ENCODE measurements at regions of chr5 and their contacts with region 1.

Region 1: DNA sequence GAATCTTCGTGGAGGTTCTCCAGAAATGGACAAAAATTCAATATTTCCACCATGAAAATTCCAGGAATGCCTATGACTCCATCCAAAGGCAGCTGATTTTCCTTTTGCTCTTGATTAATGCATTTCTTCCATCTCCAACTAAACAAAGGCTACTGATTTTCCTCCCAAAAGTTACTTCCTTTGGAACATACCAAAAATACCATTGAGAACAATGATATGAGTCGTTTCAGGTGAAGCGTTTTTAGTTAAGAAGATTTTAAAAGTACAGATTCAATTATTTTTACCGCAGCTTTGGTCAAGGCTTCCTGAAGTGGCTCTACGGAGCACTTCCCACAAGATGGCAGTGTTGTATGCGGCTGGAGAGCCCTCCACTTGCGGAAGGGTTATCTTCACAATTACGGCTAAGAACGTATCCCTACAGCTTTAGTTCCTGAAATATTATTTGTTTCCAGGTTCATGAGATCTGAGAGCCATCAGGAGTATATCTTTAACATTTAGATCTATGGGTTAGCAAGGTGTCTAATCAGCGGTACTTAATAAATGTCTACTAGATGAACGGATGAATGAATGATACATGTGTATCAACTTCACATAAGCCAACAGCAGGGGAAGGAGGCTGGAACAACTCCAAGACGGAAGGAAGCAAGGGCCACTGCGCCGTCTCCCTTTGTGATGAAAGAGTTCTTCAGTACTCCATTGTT is 35.9 kb upstream of the ARSB start:
- DNase-seq: peak; percentile 80
- H3K4me3 ChIP-seq: peak overlapping the region in 1 of 3 experiments; percentile 40
- H3K27ac ChIP-seq: no peak overlapping the region
- H3K4me1 ChIP-seq: peaks cover 16% of the 10 kb centered on the region
- H3K27me3 ChIP-seq: peaks cover 2 to 14% of the 10 kb centered on the region in 2 experiments
- CTCF ChIP-seq: peak; percentile 73 to 78
- POLR2A ChIP-seq: no peak

Region 2: GRCh38 chr5:77906806-77907205 is 1114.2 kb before region 1 on chr5:
- CTCF ChIA-PET with region 1: no interaction called
- POLR2A ChIA-PET with region 1: no interaction called
- dilution Hi-C with region 1: no loop called
- intact Hi-C with region 1: no loop called
- DNase-seq: no peak
- H3K4me3 ChIP-seq: no peak overlapping the region
- H3K27ac ChIP-seq: no peak overlapping the region
- H3K4me1 ChIP-seq: no peaks in the 10 kb centered on the region
- H3K27me3 ChIP-seq: peaks cover 12 to 21% of the 10 kb centered on the region in 2 experiments
- CTCF ChIP-seq: no peak
- POLR2A ChIP-seq: no peak

Region 3: DNA sequence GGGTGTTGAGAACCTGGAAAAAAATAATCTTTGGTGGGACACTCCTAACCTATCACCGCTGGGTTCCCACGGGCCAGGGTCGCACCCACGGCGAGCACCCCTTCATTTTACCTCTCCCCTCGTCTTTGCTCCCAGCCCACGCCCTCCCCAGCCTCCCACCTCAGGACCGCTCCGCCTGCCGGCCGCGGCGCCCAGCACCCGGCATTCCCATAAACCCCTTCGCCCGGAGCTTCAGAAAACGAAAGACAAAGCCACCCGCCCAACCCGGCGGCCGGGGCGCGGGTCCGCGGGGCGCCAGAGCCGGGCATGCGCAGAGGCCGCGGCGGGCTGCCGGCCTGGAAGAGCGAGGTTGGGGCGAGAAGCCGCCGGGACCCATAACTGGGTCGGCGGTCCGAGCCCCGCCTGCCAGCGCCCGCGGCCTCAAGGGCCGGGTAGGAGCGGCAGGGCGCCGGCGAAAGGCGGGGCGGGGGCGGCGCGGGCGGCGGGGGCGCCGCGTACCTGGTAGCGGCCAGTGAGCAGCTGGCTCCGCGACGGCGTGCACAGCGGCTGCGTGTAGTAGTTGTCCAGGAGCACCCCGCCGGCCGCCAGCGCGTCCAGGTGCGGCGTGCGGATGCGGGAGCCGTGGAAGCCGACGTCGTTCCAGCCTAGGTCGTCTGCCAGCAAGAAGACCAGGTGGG is 36.4 kb before region 1 on chr5:
- CTCF ChIA-PET with region 1: interaction called, 33 read pairs
- POLR2A ChIA-PET with region 1: no interaction called
- dilution Hi-C with region 1: no loop called
- intact Hi-C with region 1: loop called (anchors 1 kb)
- DNase-seq: peak; percentile 87
- H3K4me3 ChIP-seq: peak overlapping the region; percentile 71 to 96 (median 80)
- H3K27ac ChIP-seq: peak overlapping the region; percentile 88
- H3K4me1 ChIP-seq: peaks cover 19% of the 10 kb centered on the region
- H3K27me3 ChIP-seq: no peaks in the 10 kb centered on the region
- CTCF ChIP-seq: peak in 1 of 2 donors; percentile 45
- POLR2A ChIP-seq: peak; percentile 6

Region 4: DNA sequence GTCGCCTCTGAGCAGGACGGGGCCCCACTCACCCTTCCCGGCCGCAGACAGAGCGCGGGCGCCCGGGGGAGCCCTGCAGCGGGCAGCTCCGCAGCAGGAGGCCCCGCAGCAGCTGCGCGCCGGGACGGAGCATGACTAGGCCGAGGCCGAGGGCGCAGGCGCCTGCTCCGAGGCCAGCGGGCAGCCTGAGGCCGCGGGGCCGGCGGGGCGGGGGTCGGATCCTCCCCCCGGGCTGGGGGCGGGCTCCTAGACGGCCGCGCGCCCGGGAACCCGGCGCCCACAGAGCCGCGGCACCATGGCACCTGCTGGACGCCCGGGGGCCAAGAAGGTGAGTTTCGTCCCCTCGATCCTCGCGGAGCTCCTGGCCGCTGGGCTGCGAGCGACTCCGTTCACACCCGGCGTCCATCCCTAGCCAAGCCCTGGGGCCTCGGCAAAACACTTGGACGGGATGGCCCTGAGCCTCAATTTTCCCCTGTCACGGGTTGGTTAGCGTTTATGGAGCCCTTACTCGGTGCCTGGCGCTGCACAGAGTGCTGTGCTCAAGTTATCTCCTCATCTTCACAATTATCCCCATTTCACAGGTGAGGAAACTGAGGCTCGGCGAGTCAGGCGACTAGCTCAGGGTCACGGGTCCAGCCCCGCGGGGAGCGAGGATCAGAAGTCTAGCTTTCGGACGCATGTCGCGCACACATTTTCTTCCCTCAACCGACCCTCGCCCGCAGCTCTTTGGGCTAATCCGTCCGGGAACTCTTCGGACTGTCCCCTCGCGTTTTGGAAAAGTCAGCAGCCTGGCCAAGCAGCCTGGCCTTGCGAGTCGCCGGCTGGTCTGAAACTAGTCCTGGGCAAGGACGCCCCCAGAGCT is 48.7 kb after region 1 on chr5 and contains the starts of genes BHMT2 and DMGDH:
- CTCF ChIA-PET with region 1: interaction called, 15 read pairs
- POLR2A ChIA-PET with region 1: no interaction called
- dilution Hi-C with region 1: no loop called
- intact Hi-C with region 1: no loop called
- DNase-seq: no peak
- H3K4me3 ChIP-seq: peak within 1 kb of the TSS in 1 of 3 experiments; percentile 32
- H3K27ac ChIP-seq: no peak within 1 kb of the TSS
- H3K4me1 ChIP-seq: no peaks in the 10 kb centered on the region
- H3K27me3 ChIP-seq: peaks cover 0 to 1% of the 10 kb centered on the region in 2 experiments
- CTCF ChIP-seq: no peak
- POLR2A ChIP-seq: no peak
- total RNA-seq, gene BHMT2: 0.71 and 0.76 TPM in 2 replicates
- total RNA-seq, gene DMGDH: not detected in 2 replicates

Region 5: DNA sequence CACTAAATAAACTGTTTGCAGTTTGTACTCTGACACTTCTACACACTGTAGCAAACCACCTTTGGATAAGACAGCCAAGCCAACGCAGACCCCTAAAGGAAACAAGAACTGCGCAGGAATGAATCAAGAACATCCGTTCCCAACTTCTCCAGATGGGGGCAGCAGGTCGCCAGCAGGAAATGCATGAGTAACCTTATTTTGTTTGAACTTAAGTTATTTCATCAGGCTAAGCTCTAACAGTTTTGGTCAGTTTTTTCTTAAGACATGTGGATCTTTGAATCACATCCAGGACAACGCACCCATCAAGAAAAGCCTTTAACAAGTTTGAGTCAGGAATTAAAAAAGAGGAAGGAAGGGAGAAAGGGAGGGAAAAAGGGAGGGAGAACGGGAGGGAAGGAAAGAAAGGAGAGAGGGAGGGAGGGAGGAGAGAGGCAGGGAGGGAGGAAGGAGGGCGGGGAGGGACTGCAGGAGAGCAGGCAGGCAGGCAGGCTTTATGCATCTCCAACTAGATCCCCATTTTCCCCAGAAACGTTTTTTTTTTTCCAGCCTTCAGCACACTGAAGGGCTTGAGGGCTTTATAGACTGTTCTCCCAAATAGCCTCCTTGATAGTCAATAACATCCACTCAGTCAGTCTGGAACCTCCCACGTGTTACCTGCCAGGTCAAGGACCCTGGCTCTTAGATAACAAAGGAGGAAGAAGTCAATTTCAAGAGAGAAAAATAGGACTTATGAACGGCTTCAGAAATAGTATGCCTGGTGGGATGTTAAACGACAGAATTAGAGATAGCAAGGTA is 112.8 kb after region 1 on chr5:
- CTCF ChIA-PET with region 1: interaction called, 726 read pairs
- POLR2A ChIA-PET with region 1: interaction called, 4 read pairs
- dilution Hi-C with region 1: no loop called
- intact Hi-C with region 1: loop called (anchors 1 kb)
- DNase-seq: peak; percentile 88
- H3K4me3 ChIP-seq: peak overlapping the region in 2 of 3 experiments; percentile 0 to 50
- H3K27ac ChIP-seq: peak overlapping the region; percentile 62
- H3K4me1 ChIP-seq: peaks cover 11% of the 10 kb centered on the region
- H3K27me3 ChIP-seq: peaks cover 2 to 3% of the 10 kb centered on the region in 2 experiments
- CTCF ChIP-seq: peak; percentile 69 to 78
- POLR2A ChIP-seq: no peak

Region 6: DNA sequence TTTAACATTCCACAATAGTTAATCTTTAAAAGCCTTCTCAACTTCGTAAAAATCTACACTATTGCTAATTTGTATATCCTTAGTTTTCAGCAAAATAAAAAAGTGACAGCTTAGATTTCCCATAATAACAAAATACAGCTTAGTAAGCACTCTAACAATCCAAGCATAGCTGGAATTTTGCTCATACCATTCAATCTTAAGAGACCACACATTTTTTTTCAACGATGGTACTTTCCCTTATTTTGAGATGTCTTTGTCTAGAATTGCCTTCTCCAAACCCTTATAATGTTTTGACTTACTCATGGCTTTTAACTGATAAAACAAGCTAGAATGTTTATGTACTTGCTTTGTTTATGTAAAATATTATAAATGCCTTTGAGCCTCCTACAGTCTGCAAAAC is 427.3 kb after region 1 on chr5:
- CTCF ChIA-PET with region 1: interaction called, 12 read pairs
- POLR2A ChIA-PET with region 1: no interaction called
- dilution Hi-C with region 1: no loop called
- intact Hi-C with region 1: no loop called
- DNase-seq: no peak
- H3K4me3 ChIP-seq: no peak overlapping the region
- H3K27ac ChIP-seq: no peak overlapping the region
- H3K4me1 ChIP-seq: no peaks in the 10 kb centered on the region
- H3K27me3 ChIP-seq: no peaks in the 10 kb centered on the region
- CTCF ChIP-seq: no peak
- POLR2A ChIP-seq: no peak

Region 7: GRCh38 chr5:79514391-79515105 is 493.5 kb after region 1 on chr5:
- CTCF ChIA-PET with region 1: interaction called, 12 read pairs
- POLR2A ChIA-PET with region 1: no interaction called
- dilution Hi-C with region 1: no loop called
- intact Hi-C with region 1: no loop called
- DNase-seq: peak; percentile 86
- H3K4me3 ChIP-seq: peak overlapping the region; percentile 80 to 89 (median 87)
- H3K27ac ChIP-seq: peak overlapping the region; percentile 68
- H3K4me1 ChIP-seq: peaks cover 23% of the 10 kb centered on the region
- H3K27me3 ChIP-seq: peaks cover 0 to 2% of the 10 kb centered on the region in 2 experiments
- CTCF ChIP-seq: no peak
- POLR2A ChIP-seq: peak; percentile 11

Region 8: GRCh38 chr5:79857714-79858409 is 836.9 kb after region 1 on chr5:
- CTCF ChIA-PET with region 1: interaction called, 31 read pairs
- POLR2A ChIA-PET with region 1: no interaction called
- dilution Hi-C with region 1: no loop called
- intact Hi-C with region 1: loop called (anchors 1 kb)
- DNase-seq: peak; percentile 66
- H3K4me3 ChIP-seq: no peak overlapping the region
- H3K27ac ChIP-seq: no peak overlapping the region
- H3K4me1 ChIP-seq: no peaks in the 10 kb centered on the region
- H3K27me3 ChIP-seq: no peaks in the 10 kb centered on the region
- CTCF ChIP-seq: peak; percentile 92 to 94
- POLR2A ChIP-seq: no peak

Measured in endothelial cell of umbilical vein (primary cell).